ENCODE measurements at regions of chr4 and their contacts with region 1.

Region 1: GRCh38 chr4:139734875-139735380 is 69.3 kb downstream of the MGST2 start:
- DNase-seq: peak; percentile 87 to 97 (median 96)
- H3K4me3 ChIP-seq: peak overlapping the region; percentile 16 to 82 (median 57)
- H3K27ac ChIP-seq: peak overlapping the region in 1 of 2 experiments; percentile 63
- H3K4me1 ChIP-seq: peaks cover 6 to 26% (median 13%) of the 10 kb centered on the region in 4 experiments
- H3K27me3 ChIP-seq: no peaks in the 10 kb centered on the region

Region 2: GRCh38 chr4:139922406-139923024 is 187.6 kb after region 1 on chr4:
- CTCF ChIA-PET with region 1: no interaction called
- POLR2A ChIA-PET with region 1: no interaction called
- DNase-seq: no peak
- H3K4me3 ChIP-seq: no peak overlapping the region
- H3K27ac ChIP-seq: no peak overlapping the region
- H3K4me1 ChIP-seq: peaks cover 0 to 33% (median 21%) of the 10 kb centered on the region in 4 experiments
- H3K27me3 ChIP-seq: no peaks in the 10 kb centered on the region

Region 3: GRCh38 chr4:140252742-140253555 is 518.0 kb after region 1 on chr4:
- CTCF ChIA-PET with region 1: interaction called, 19 read pairs
- POLR2A ChIA-PET with region 1: no interaction called
- DNase-seq: peak; percentile 63 to 77 (median 76)
- H3K4me3 ChIP-seq: peak overlapping the region; percentile 41 to 80 (median 68)
- H3K27ac ChIP-seq: peak overlapping the region; percentile 27 to 74
- H3K4me1 ChIP-seq: peaks cover 8 to 35% (median 22%) of the 10 kb centered on the region in 4 experiments
- H3K27me3 ChIP-seq: no peaks in the 10 kb centered on the region